K562 (cell line): ENCODE measurements at regions of chr1 and their contacts with region 1.

Region 1: DNA sequence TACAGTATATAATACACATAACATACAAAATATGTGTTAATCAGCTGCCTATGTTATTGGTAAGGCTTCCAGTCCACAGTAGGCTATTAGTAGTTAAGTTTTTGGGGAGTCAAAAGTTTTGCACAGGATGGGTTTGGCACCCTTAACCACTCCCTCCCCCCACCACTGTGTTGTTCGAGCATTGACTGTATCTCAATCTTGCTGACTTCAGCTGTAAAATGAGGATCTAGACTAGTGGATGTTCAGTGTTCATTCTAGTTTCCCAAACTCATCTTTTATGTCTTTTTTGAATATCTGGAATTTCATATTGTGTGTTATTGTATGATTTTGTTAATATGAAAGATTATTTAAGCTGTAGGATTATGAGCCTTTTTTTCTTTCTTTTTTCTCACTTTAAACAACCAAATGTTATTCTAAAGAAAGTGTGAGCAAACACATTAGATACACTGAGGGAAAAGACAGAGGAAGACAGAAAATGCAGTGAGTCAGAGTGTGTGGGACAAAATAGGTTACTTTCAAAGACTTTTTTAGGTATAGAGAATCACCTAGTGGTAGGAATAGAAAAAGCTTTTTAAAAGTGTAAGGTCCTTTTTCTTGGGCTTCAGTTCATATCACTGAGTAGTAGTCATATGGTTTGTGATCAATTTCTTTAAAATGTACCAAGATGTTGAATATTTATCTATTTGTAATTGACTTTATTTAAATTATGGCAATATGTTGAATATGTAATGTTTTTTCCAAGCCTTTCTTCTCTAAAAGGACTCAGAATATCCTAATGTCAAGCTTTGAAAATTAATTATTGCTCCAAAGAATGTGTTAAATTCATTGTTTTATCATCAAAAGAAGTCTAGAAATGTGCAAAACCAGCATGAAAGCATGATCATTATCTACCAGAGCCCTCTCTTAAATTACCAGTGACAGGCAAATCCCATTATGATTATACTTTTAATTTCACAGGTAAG is 17.9 kb upstream of the CENPF start:
- DNase-seq: peak in 3 of 4 experiments; percentile 19 to 23 (median 21)
- ATAC-seq: peak; percentile 88
- H3K4me3 ChIP-seq: no peak overlapping the region
- H3K27ac ChIP-seq: no peak overlapping the region
- H3K4me1 ChIP-seq: no peaks in the 10 kb centered on the region
- H3K27me3 ChIP-seq: peaks cover 2 to 8% of the 10 kb centered on the region in 2 experiments; a peak in 3 of 5 replicates
- CTCF ChIP-seq: peak; percentile 24 to 72 (median 41); a peak in 4 of 6 replicates
- EP300 ChIP-seq: no peak
- POLR2A ChIP-seq: no peak
- RAD21 ChIP-seq: peak; percentile 70 to 80

Region 2: DNA sequence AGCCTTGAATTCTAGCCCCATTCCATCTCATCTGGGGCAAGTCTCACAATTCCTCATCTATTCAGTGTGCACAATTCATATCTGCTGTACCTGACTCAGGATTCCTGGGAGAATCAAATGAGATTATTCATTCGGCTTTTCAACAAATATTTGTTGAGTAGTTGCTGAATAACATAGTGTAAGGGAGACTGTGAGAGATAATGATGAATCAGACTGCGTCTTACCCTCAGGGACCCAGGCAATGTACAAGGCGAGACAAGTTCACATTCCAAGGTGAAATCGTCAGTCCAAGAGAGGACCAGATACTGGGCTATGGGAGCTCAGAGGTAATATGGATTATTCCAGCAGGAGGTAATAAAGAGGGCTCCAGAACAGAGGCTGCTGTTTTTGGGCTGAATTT is 371.9 kb before region 1 on chr1:
- CTCF ChIA-PET with region 1: no interaction called
- POLR2A ChIA-PET with region 1: no interaction called
- in situ Hi-C with region 1: no loop called
- intact Hi-C with region 1: loop called (anchors 5 kb)
- DNase-seq: no peak
- ATAC-seq: no peak
- H3K4me3 ChIP-seq: no peak overlapping the region
- H3K27ac ChIP-seq: no peak overlapping the region
- H3K4me1 ChIP-seq: 0 out of 5 replicates have a peak, but pooled peaks cover 0 to 3% of the 10 kb centered on the region in 2 experiments
- H3K27me3 ChIP-seq: peaks cover 0 to 11% of the 10 kb centered on the region in 2 experiments; a peak in 2 of 5 replicates
- CTCF ChIP-seq: no peak
- EP300 ChIP-seq: no peak
- POLR2A ChIP-seq: no peak
- RAD21 ChIP-seq: no peak

Region 3: GRCh38 chr1:214261206-214262123 is 323.6 kb before region 1 on chr1:
- CTCF ChIA-PET with region 1: no interaction called
- POLR2A ChIA-PET with region 1: no interaction called
- in situ Hi-C with region 1: no loop called
- intact Hi-C with region 1: loop called (anchors 10 kb)
- DNase-seq: peak; percentile 77 to 88 (median 80)
- ATAC-seq: peak; percentile 99
- H3K4me3 ChIP-seq: no peak overlapping the region
- H3K27ac ChIP-seq: no peak overlapping the region
- H3K4me1 ChIP-seq: peaks cover 0 to 4% of the 10 kb centered on the region in 2 experiments; a peak in 1 of 5 replicates
- H3K27me3 ChIP-seq: peaks cover 7 to 10% of the 10 kb centered on the region in 2 experiments; a peak in 4 of 5 replicates
- CTCF ChIP-seq: peak; percentile 91 to 97 (median 96)
- EP300 ChIP-seq: no peak
- POLR2A ChIP-seq: no peak
- RAD21 ChIP-seq: peak; percentile 84 to 94

Region 4: DNA sequence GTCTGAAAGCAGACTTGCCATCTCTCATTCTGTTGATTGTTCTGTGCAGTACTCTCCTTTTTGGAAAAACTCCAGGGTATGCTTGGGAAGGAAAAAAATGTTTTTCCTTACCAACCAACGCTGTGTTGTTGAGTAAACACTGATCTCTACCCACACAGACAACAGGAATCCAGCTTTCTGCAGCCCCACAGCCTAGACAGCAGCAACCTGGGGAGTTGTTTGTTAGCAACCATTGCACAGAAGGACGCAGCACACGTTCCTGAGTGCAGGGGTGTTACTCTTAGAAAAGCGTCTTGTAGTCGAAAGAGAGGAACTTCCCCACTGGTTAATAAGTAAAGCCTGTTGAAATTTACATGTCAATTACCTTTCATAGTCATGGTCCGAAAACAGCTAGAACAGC is 247.6 kb before region 1 on chr1:
- CTCF ChIA-PET with region 1: no interaction called
- POLR2A ChIA-PET with region 1: no interaction called
- in situ Hi-C with region 1: loop called (anchors 5 kb)
- intact Hi-C with region 1: loop called (anchors 1 kb)
- DNase-seq: no peak
- ATAC-seq: no peak
- H3K4me3 ChIP-seq: no peak overlapping the region
- H3K27ac ChIP-seq: no peak overlapping the region
- H3K4me1 ChIP-seq: no peaks in the 10 kb centered on the region
- H3K27me3 ChIP-seq: no peaks in the 10 kb centered on the region
- CTCF ChIP-seq: no peak
- EP300 ChIP-seq: no peak
- POLR2A ChIP-seq: no peak
- RAD21 ChIP-seq: no peak

Region 5: DNA sequence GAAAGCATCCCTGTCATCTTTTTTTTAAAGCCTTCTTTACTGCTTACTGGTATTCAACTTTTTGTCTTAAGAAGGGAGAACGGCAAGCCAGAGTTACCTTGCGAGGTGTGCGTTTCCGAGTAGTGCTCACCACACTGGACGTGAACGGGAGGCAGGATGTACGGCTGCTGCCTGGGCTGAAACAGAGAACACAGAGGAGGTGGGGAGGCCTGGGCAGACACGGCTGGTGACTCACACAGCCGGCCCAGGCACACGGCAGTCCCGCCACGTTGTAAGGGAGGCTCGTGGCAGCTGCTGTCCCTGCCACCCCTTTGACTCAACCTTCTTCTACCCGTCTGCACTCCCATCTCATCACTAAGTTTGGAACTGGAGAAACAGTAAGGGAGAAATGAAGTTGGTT is 198.3 kb before region 1 on chr1:
- CTCF ChIA-PET with region 1: no interaction called
- POLR2A ChIA-PET with region 1: no interaction called
- in situ Hi-C with region 1: no loop called
- intact Hi-C with region 1: loop called (anchors 1 kb)
- DNase-seq: no peak
- ATAC-seq: peak; percentile 61
- H3K4me3 ChIP-seq: no peak overlapping the region
- H3K27ac ChIP-seq: no peak overlapping the region
- H3K4me1 ChIP-seq: peaks cover 0 to 10% of the 10 kb centered on the region in 2 experiments; a peak in 1 of 5 replicates
- H3K27me3 ChIP-seq: peaks cover 30 to 42% of the 10 kb centered on the region in 2 experiments
- CTCF ChIP-seq: no peak
- EP300 ChIP-seq: no peak
- POLR2A ChIP-seq: no peak
- RAD21 ChIP-seq: no peak

Region 6: GRCh38 chr1:214816603-214817002 is 231.5 kb after region 1 on chr1:
- CTCF ChIA-PET with region 1: no interaction called
- POLR2A ChIA-PET with region 1: no interaction called
- in situ Hi-C with region 1: no loop called
- intact Hi-C with region 1: no loop called
- DNase-seq: no peak
- ATAC-seq: no peak
- H3K4me3 ChIP-seq: no peak overlapping the region
- H3K27ac ChIP-seq: no peak overlapping the region
- H3K4me1 ChIP-seq: no peaks in the 10 kb centered on the region
- H3K27me3 ChIP-seq: no peaks in the 10 kb centered on the region
- CTCF ChIP-seq: no peak
- EP300 ChIP-seq: no peak
- POLR2A ChIP-seq: no peak
- RAD21 ChIP-seq: no peak